Activated CD4-positive, alpha-beta T cell treated with anti-CD3 and anti-CD28 coated beads, Interleukin-2, amount 10 ng/mL, durations not matched to agents 7 days and 5 days (primary cell): ENCODE measurements at regions of chr11 and their contacts with region 1.

Region 1: DNA sequence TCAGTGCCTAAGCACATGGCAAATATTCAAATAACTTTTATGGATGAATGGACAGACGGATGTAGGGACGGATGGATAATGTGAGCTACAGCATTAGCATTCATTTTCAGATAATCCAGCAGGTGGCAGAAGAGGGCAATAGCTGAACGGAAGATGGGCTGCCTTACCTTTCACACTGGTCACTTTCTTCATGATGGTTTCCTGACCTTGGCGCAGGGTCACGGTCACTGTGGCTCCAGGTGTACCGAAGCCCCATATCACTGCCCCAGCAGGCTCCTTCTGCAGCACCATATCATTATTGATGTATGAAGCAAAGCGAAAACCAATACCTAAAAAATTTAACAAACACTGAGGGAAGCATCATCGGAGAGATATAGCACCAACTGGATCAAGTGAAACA is 4.3 kb downstream of the SIAE start:
- DNase-seq: peak; percentile 60
- H3K4me3 Mint-ChIP-seq: no peak overlapping the region
- H3K27ac Mint-ChIP-seq: no peak overlapping the region
- H3K4me1 Mint-ChIP-seq: peaks cover 29% of the 10 kb centered on the region
- H3K27me3 Mint-ChIP-seq: no peaks in the 10 kb centered on the region

Region 2: GRCh38 chr11:124758317-124759203 is 89.4 kb after region 1 on chr11:
- CTCF ChIA-PET with region 1: interaction called, 22 read pairs
- POLR2A ChIA-PET with region 1: no interaction called
- DNase-seq: peak; percentile 67
- H3K4me3 Mint-ChIP-seq: peak overlapping the region; percentile 38
- H3K27ac Mint-ChIP-seq: no peak overlapping the region
- H3K4me1 Mint-ChIP-seq: peaks cover 23% of the 10 kb centered on the region
- H3K27me3 Mint-ChIP-seq: peaks cover 50% of the 10 kb centered on the region

Region 3: GRCh38 chr11:124769801-124770639 is 100.8 kb after region 1 on chr11:
- CTCF ChIA-PET with region 1: interaction called, 22 read pairs
- POLR2A ChIA-PET with region 1: no interaction called
- DNase-seq: no peak
- H3K4me3 Mint-ChIP-seq: no peak overlapping the region
- H3K27ac Mint-ChIP-seq: no peak overlapping the region
- H3K4me1 Mint-ChIP-seq: no peaks in the 10 kb centered on the region
- H3K27me3 Mint-ChIP-seq: no peaks in the 10 kb centered on the region

Region 4: GRCh38 chr11:124837491-124837856 is 168.3 kb after region 1 on chr11:
- CTCF ChIA-PET with region 1: interaction called, 10 read pairs
- POLR2A ChIA-PET with region 1: no interaction called
- DNase-seq: peak; percentile 17
- H3K4me3 Mint-ChIP-seq: peak overlapping the region; percentile 67
- H3K27ac Mint-ChIP-seq: no peak overlapping the region
- H3K4me1 Mint-ChIP-seq: peaks cover 17% of the 10 kb centered on the region
- H3K27me3 Mint-ChIP-seq: peaks cover 64% of the 10 kb centered on the region